ENCODE measurements at regions of chr5 and their contacts with region 1.

Region 1: DNA sequence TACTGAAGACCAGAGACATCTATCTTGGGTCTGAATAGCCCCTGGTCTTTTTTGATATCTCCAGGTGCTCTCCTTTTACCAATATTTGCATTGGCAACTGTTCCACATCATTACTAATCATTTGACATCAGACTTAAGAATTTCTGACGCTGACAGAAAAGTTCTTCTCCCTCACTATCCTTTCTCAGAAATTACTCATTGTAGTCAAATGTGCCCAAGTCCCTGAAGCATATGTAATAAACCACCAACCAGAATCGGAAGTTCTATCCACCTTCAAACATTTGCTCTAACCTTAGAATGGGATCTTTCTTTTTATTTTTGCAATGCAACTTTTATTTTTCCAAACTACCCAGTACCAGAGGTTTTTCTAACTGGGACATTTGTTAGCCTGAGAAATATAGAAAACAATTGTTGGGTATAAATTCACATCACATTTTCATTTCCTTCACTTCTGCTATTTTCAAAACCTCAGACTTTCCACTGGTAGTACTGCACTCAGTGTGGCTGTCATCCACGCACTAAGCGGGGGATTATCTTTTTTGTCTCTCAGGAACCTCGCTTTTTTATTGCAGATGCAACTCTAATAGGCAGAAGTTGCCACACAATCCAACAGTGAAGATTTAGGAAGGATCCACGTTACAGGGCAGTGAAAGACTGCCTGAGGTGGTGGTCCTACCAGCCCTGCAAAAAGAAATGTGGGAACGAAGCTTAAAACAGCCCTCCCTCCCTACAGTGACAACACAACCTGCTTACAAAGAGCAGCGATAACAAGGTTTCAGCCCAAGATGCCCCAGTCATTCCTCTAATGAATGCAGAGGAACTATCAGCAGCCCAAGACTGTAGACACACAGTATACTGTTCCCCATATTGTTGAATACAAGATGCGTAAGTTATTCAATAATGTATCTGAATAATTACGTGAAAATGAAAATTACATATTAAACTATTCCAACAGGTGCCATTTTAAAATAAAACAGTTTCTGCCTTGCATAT is 201.2 kb downstream of the EBF1 start:
- DNase-seq: no peak
- ATAC-seq: no peak
- H3K4me3 ChIP-seq: no peak overlapping the region
- H3K27ac ChIP-seq: no peak overlapping the region
- H3K4me1 ChIP-seq: no peaks in the 10 kb centered on the region
- H3K27me3 ChIP-seq: peaks cover 1% of the 10 kb centered on the region; the same call in 1 of the 2 replicates
- CTCF ChIP-seq: no peak
- POLR2A ChIP-seq: no peak
- RAD21 ChIP-seq: no peak

Region 2: DNA sequence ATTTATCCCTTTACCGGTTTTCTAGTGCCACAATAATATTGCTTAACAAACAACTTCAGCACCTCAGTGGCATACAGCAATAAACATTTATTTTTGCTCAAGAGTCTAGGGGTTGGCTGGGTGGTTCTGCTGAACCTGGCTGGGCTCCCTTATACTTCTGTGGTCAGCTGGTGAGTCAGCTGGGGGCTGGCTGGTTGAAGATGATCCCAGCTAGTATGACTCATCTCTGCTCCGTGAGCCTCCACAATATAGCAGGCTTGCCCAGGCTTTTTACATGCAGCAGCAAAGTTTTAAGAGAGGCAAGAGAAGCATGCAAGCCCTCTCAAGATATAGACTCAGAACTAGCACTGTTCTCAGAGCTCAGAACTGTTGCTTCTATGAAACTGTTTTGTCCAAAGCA is 516.0 kb before region 1 on chr5:
- CTCF ChIA-PET with region 1: no interaction called
- POLR2A ChIA-PET with region 1: no interaction called
- dilution Hi-C with region 1: no loop called
- in situ Hi-C with region 1: no loop called
- intact Hi-C with region 1: no loop called
- DNase-seq: peak; percentile 97
- ATAC-seq: peak; percentile 91
- H3K4me3 ChIP-seq: no peak overlapping the region
- H3K27ac ChIP-seq: no peak overlapping the region
- H3K4me1 ChIP-seq: peaks cover 8% of the 10 kb centered on the region
- H3K27me3 ChIP-seq: no peaks in the 10 kb centered on the region
- CTCF ChIP-seq: no peak
- POLR2A ChIP-seq: no peak
- RAD21 ChIP-seq: peak; percentile 2; the same call in 1 of the 2 replicates

Region 3: DNA sequence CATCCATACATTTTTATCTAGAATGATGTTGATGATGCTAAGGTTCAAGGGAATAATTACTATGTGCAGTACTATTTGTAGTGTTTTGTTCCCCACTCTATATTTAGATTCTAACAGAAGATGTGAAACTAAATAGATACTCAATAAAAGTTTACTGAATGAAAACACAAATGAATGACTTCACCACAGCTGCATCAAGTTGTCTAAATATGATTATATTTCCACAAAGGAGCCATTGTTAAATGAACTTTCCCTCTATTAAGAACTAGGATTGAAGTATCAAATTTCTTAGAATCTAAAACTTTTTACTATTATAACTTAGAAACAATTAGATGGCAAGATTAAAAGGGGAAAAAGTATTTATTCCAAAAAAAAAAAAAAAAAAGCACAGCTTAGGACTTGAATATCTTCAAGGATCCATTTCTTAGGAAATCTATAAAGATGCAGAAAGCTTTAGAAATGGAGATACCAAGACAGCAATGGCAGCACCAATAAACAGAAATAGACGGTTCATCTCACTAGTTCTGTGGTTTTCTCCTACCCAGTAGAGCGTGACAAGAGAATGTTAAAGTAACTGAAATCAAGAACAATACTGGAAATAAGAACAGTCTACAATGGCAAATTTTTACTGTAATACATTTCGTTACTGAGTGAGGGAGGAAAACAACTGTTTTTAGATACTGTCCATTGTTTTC is 146.4 kb before region 1 on chr5:
- CTCF ChIA-PET with region 1: no interaction called
- POLR2A ChIA-PET with region 1: no interaction called
- dilution Hi-C with region 1: no loop called
- in situ Hi-C with region 1: no loop called
- intact Hi-C with region 1: loop called (anchors 5 kb)
- DNase-seq: no peak
- ATAC-seq: no peak
- H3K4me3 ChIP-seq: no peak overlapping the region
- H3K27ac ChIP-seq: no peak overlapping the region
- H3K4me1 ChIP-seq: no peaks in the 10 kb centered on the region
- H3K27me3 ChIP-seq: no peaks in the 10 kb centered on the region
- CTCF ChIP-seq: no peak
- POLR2A ChIP-seq: no peak
- RAD21 ChIP-seq: no peak